Transverse colon (tissue), 4 donors: ENCODE measurements at regions of chr13 and their contacts with region 1.

Region 1: GRCh38 chr13:45333973-45334922 is 6.7 kb downstream of the TPT1 start:
- DNase-seq: no peak
- H3K4me3 ChIP-seq: no peak overlapping the region
- H3K27ac ChIP-seq: peak overlapping the region in 2 of 4 donors; percentile 10 to 20
- H3K4me1 ChIP-seq: peaks cover 20 to 74% (median 43%) of the 10 kb centered on the region in 4 donors
- H3K27me3 ChIP-seq: no peaks in the 10 kb centered on the region
- CTCF ChIP-seq: no peak
- EP300 ChIP-seq: no peak
- POLR2A ChIP-seq: no peak

Region 2: DNA sequence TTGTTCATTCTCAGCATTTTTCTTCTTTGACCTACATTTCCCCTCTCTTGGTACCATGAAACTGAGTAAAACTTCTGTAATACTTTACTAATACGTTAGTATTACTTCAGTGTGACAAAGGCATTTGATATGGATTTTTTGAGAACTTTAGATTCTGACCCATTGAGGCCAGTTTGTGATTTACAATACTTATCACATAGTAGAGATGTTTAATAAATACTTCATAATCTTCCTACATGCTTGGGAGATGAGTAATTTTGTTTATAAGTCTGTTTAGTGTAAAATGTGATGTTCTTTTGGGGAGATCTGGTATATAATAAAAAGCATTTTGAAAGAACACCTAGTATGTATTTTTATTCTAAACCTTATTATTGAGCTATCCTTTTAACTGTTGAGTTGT is 184.3 kb before region 1 on chr13:
- in situ Hi-C with region 1: no loop called
- intact Hi-C with region 1: no loop called
- DNase-seq: no peak
- H3K4me3 ChIP-seq: no peak overlapping the region
- H3K27ac ChIP-seq: no peak overlapping the region
- H3K4me1 ChIP-seq: peaks cover 0 to 8% (median 0%) of the 10 kb centered on the region in 4 donors
- H3K27me3 ChIP-seq: no peaks in the 10 kb centered on the region
- CTCF ChIP-seq: no peak
- EP300 ChIP-seq: no peak
- POLR2A ChIP-seq: no peak

Region 3: DNA sequence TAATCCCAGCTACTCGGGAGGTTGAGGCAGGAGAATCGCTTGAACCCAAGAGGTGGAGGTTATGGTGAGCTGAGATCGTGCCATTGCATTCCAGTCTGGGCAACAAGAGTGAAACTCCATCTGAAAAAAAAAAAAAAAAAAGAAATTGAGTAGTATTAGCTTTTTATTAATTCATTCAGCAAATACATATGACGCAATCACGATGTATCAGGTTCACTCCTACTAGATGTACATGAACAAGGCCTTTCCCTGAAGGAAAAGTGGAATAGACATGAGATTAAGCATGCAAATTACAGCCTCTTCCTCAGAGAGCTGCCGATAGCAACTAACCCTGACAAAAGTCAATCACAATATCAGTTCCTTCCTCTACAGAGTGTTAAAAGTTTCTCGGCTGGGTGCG is 15.9 kb after region 1 on chr13:
- in situ Hi-C with region 1: no loop called
- intact Hi-C with region 1: loop called (anchors 1 kb)
- DNase-seq: no peak
- H3K4me3 ChIP-seq: no peak overlapping the region
- H3K27ac ChIP-seq: no peak overlapping the region
- H3K4me1 ChIP-seq: no peaks in the 10 kb centered on the region
- H3K27me3 ChIP-seq: no peaks in the 10 kb centered on the region
- CTCF ChIP-seq: no peak
- EP300 ChIP-seq: no peak
- POLR2A ChIP-seq: no peak

Region 4: DNA sequence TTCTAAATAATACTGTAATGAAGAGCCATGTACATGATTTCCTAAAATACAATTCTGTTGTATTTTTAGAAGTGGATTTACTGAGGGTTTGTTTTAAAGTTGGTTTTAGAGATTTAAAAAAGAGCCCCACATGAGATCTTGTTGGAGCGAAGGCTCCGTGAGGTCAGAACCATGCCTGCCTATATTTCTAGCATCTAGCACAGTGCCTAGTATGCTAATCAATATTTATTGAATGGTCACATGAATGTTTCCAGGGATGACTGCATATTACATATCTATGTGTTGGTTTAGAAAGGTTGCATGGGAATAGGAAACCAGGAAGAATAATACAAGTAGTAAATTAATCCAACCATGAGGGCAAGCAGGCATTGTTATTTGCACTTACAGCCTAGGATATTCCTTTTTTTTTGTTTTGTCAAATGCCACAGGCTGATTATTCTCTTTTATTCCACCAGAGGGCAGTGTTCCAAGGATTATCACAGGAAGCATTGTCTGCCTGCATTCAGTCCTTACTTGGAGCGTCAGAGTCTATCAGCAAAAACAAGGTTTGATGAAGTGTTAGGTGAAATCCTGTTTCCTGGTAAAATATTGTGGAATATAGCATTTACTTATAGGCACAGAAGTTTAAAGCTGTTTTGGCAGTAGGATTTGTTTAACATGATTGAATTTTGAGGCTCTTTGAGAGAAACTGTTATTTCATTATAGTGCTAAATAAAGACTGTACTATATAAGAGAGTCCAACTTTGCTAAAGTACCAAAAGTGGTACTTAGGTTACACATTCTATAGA is 177.3 kb after region 1 on chr13:
- in situ Hi-C with region 1: no loop called
- intact Hi-C with region 1: no loop called
- DNase-seq: no peak
- H3K4me3 ChIP-seq: no peak overlapping the region
- H3K27ac ChIP-seq: no peak overlapping the region
- H3K4me1 ChIP-seq: no peaks in the 10 kb centered on the region
- H3K27me3 ChIP-seq: no peaks in the 10 kb centered on the region
- CTCF ChIP-seq: peak; percentile 77 to 97 (median 90)
- EP300 ChIP-seq: no peak
- POLR2A ChIP-seq: no peak